GM10248 (cell line): ENCODE measurements at regions of chr3 and their contacts with region 1.

Region 1: GRCh38 chr3:72359738-72360137 is 488.5 kb downstream of the SHQ1 start:
- DNase-seq: no peak
- CTCF ChIP-seq: no peak

Region 2: GRCh38 chr3:72288955-72289691 is 70.6 kb before region 1 on chr3:
- CTCF ChIA-PET with region 1: no interaction called
- POLR2A ChIA-PET with region 1: no interaction called
- DNase-seq: peak; percentile 49
- CTCF ChIP-seq: no peak

Region 3: GRCh38 chr3:72375237-72376076 is 15.7 kb after region 1 on chr3:
- CTCF ChIA-PET with region 1: interaction called, 10 read pairs
- POLR2A ChIA-PET with region 1: interaction called, 3 read pairs
- DNase-seq: peak; percentile 57
- CTCF ChIP-seq: no peak